Psoas muscle (tissue), 8 donors: ENCODE measurements at regions of chr2 and their contacts with region 1.

Region 1: DNA sequence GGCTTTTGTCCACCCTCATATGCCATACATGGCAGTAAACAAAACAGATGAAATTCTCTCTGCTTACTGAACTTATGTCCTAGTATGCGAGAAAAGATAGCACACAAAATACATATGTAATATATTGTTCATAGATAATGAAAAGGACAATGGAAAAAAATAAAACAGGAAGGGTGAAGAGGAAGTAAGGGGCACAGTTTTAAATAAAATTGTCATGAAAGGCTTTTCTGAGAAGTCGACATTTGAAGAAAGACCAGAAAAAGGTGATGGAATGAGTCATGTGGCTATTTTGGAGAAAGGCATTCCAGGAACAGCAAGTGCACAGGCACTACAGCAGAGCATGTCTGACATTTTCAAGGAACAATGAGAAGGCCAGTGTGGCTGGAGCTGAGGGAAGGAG is 56.4 kb downstream of the KCNH7 start:
- DNase-seq: no peak
- ATAC-seq: no peak
- H3K4me3 ChIP-seq: no peak overlapping the region
- H3K27ac ChIP-seq: no peak overlapping the region
- H3K4me1 ChIP-seq: no peaks in the 10 kb centered on the region
- H3K27me3 ChIP-seq: no peaks in the 10 kb centered on the region
- CTCF ChIP-seq: no peak

Region 2: DNA sequence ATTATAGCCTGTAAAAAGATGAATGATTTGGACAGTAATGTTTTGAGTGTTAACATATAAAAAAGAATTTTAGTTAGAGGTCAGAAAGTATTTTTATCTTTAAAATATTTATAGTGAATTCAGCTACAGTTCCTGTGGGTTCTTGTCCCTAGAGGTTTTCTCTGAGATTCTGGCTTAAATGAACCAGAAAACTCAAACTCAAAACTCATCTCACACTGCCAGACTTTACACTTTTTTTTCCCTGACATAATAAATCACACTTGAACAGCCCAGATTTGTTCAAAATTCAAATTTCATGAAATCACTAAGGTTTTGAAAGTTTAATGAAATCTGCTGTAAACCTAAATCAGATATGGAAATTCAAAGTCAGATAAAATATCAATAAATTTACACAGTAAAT is 35.8 kb before region 1 on chr2:
- intact Hi-C with region 1: loop called in 1 of 2 experiments (anchors 2 kb)
- DNase-seq: no peak
- ATAC-seq: no peak
- H3K4me3 ChIP-seq: no peak overlapping the region
- H3K27ac ChIP-seq: no peak overlapping the region
- H3K4me1 ChIP-seq: no peaks in the 10 kb centered on the region
- H3K27me3 ChIP-seq: no peaks in the 10 kb centered on the region
- CTCF ChIP-seq: no peak

Region 3: GRCh38 chr2:162938387-162938786 is 156.2 kb after region 1 on chr2:
- intact Hi-C with region 1: no loop called
- DNase-seq: no peak
- ATAC-seq: no peak
- H3K4me3 ChIP-seq: no peak overlapping the region
- H3K27ac ChIP-seq: no peak overlapping the region
- H3K4me1 ChIP-seq: no peaks in the 10 kb centered on the region
- H3K27me3 ChIP-seq: no peaks in the 10 kb centered on the region
- CTCF ChIP-seq: no peak